ENCODE measurements at regions of chr9 and their contacts with region 1.

Region 1: GRCh38 chr9:124708633-124709291 is 62.3 kb downstream of the NR6A1 start:
- DNase-seq: no peak
- H3K4me3 Mint-ChIP-seq: no peak overlapping the region
- H3K27ac Mint-ChIP-seq: no peak overlapping the region
- H3K4me1 Mint-ChIP-seq: no peaks in the 10 kb centered on the region
- H3K27me3 Mint-ChIP-seq: peaks cover 3% of the 10 kb centered on the region

Region 2: GRCh38 chr9:124420991-124421543 is 287.7 kb before region 1 on chr9:
- CTCF ChIA-PET with region 1: no interaction called
- intact Hi-C with region 1: loop called (anchors 1 kb)
- DNase-seq: no peak
- H3K4me3 Mint-ChIP-seq: no peak overlapping the region
- H3K27ac Mint-ChIP-seq: no peak overlapping the region
- H3K4me1 Mint-ChIP-seq: no peaks in the 10 kb centered on the region
- H3K27me3 Mint-ChIP-seq: no peaks in the 10 kb centered on the region

Region 3: DNA sequence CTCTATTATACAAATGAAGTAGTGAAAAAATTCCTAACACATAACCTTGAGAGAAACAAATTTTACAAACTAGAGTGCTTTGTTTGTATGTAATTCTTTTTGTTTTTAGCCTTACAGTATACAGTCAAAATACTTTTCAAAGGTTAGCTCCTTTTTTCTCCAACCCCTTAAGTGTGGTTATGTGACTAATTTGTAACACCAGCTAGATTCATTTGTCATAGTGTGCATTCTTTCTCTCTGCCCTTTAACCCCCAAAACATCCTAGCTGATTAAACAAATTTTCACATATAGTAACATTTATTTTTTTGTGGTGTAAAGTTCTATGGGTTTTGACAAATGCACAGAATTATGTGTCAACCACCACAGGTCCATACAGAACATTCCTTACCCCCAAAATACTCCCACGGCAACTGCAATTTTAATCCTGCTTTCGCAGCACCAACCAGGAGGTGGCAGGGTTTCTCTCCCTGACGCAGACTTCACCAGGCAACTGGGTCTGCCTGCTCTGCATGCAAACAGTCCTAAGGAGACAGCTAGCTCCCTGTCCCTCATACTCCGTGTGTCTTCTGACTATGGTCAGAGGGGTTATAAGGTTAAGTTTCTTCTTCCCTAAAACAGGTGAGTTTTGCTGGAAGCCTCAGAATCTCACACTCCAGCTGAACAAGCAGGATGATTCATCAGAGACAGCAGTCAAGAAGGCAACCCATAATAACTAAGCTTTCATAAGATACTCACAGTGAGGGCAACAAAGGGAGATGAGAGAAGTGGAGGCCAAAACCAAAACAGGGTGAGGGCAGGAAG is 157.1 kb before region 1 on chr9:
- CTCF ChIA-PET with region 1: interaction called, 10 read pairs
- intact Hi-C with region 1: loop called (anchors 1 kb)
- DNase-seq: peak; percentile 62
- H3K4me3 Mint-ChIP-seq: no peak overlapping the region
- H3K27ac Mint-ChIP-seq: no peak overlapping the region
- H3K4me1 Mint-ChIP-seq: peaks cover 18% of the 10 kb centered on the region
- H3K27me3 Mint-ChIP-seq: no peaks in the 10 kb centered on the region

Region 4: GRCh38 chr9:124754289-124754688 is 45.5 kb after region 1 on chr9:
- CTCF ChIA-PET with region 1: interaction called, 3 read pairs
- intact Hi-C with region 1: loop called (anchors 1 kb)
- DNase-seq: no peak
- H3K4me3 Mint-ChIP-seq: no peak overlapping the region
- H3K27ac Mint-ChIP-seq: no peak overlapping the region
- H3K4me1 Mint-ChIP-seq: peaks cover 19% of the 10 kb centered on the region
- H3K27me3 Mint-ChIP-seq: peaks cover 52% of the 10 kb centered on the region

Region 5: GRCh38 chr9:124861342-124862229 is 152.8 kb after region 1 on chr9 and contains the starts of genes ARPC5L and RPL35:
- CTCF ChIA-PET with region 1: no interaction called
- intact Hi-C with region 1: no loop called
- DNase-seq: peak; percentile 96
- H3K4me3 Mint-ChIP-seq: peak within 1 kb of the TSS; percentile 87
- H3K27ac Mint-ChIP-seq: peak within 1 kb of the TSS; percentile 95
- H3K4me1 Mint-ChIP-seq: peaks cover 46% of the 10 kb centered on the region
- H3K27me3 Mint-ChIP-seq: no peaks in the 10 kb centered on the region
- total RNA-seq, gene ARPC5L: 116 to 123 TPM
- total RNA-seq, gene RPL35: 2,701 to 2,729 TPM